ENCODE measurements at regions of chr18 and their contacts with region 1.

Region 1: GRCh38 chr18:43970656-43971055 is 693.4 kb upstream of the SYT4 start:
- DNase-seq: no peak
- ATAC-seq: no peak

Region 2: GRCh38 chr18:44180683-44181082 is 210.0 kb after region 1 on chr18:
- intact Hi-C with region 1: no loop called
- DNase-seq: no peak
- ATAC-seq: no peak

Region 3: DNA sequence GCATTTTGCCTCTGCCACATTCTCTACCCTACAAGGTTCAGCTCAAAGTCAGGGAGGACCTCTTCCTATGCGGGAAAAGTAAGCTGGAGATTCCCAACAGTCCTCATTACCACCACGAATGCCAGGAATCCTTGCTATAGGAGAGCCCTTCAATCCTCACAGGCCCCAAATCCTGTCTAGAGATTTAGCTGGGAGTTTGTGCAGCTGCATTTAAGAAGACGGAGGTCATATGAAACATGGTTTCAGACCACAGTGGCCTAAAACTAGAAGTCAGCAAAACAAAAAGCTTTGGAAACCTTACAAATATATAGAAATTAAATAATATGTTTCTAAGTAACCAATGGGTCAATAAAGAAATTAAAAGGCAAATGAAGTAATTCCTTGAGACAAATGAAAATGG is 294.8 kb after region 1 on chr18:
- intact Hi-C with region 1: no loop called
- DNase-seq: no peak
- ATAC-seq: no peak

Region 4: GRCh38 chr18:44290366-44290977 is 319.8 kb after region 1 on chr18:
- intact Hi-C with region 1: no loop called
- DNase-seq: no peak
- ATAC-seq: no peak

Region 5: DNA sequence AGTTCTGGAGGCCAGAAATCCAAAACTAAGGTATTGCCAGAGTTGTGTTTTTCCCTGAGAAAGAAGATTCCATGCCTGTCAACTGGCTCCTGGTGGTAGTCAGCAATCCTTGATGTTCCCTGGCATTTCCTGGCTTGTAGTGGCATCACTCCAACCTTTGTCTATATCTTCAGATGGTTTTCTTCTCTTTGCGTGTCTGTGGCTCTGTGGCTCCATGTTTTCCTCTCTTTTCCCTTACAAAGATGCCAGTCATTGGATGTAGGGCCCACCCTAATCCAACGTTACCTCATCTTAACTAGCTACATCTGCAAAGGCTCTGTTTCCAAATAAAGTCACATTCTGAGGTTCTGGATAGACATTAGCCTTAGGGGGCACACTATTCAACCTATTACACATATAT is 1795.1 kb after region 1 on chr18:
- intact Hi-C with region 1: loop called (anchors 5 kb)
- DNase-seq: no peak
- ATAC-seq: no peak